MCF 10A (cell line): ENCODE measurements at regions of chr18 and their contacts with region 1.

Region 1: DNA sequence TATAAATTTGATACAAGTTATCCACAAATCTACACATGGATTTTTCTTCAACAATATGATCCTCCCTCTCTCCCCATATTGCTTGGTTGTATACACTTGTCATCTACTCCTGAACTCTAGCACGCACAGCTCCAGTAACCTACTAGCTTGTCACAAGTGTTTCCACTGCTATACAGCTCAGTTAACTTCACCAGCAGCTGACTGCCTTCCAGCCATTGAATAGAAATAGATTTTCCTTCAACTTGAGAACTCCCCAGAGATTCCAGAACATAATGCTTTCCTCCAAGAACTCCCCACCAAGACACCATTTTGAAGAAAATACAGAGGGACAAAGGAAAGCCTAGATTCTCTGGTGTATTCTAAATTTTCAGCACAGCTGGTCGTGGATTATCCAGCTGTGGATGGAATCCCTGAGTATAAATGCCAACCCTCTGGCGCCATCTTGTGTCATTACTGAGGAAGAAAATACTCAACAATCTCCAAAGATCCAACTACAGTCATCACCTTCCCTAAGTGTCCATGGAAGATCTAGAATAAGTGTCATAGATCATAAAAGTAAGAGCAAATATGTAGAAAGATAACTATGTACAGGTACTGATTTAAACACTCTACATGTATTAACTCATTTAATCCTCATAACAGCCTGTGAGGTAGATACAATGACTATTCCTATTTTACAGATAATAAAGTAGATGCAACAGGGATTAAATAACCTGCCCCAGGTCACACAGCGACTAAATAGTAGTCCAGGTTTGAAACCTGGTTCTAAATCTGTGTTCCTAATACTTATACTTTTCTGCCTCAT is 156.7 kb downstream of the ARHGAP28 start:
- DNase-seq: peak; percentile 69
- H3K4me3 Mint-ChIP-seq: no peak overlapping the region
- H3K27ac Mint-ChIP-seq: no peak overlapping the region
- H3K4me1 Mint-ChIP-seq: peaks cover 6% of the 10 kb centered on the region
- H3K27me3 Mint-ChIP-seq: no peaks in the 10 kb centered on the region
- CTCF ChIP-seq: peak; percentile 81

Region 2: DNA sequence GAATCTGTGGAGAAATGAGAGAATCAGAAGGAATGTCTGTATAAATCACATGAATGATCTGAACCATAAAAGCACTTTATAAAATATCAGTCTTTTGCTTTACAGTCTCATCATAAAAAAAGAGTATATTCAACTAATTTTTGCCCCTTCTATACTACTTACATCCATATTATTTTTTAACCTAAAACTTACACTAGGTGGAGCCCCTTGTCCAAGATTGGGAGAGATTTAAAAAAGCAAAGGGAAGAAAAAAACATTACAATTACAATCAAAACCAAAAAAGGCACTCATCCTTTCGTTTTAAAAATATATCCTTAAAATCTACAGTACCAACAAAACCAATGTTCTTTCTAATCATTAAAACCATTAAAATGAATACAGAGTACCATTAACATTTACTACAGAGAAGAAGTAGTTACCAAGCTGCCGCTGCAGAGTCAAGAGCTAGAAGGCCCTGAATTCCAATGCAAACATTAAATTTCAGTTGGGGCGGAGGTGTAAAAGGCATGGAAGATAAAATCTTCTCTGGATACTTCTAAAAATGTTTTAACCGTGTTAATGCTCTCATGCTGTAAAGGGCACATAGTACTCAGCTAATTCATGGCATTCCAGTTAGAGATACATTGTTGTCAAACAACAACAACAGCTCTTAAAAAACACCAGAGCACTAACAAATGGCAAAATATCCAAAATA is 1285.7 kb before region 1 on chr18:
- CTCF ChIA-PET with region 1: interaction called, 4 read pairs
- POLR2A ChIA-PET with region 1: no interaction called
- intact Hi-C with region 1: loop called (anchors 10 kb)
- DNase-seq: peak; percentile 14
- H3K4me3 Mint-ChIP-seq: no peak overlapping the region
- H3K27ac Mint-ChIP-seq: no peak overlapping the region
- H3K4me1 Mint-ChIP-seq: peaks cover 1% of the 10 kb centered on the region
- H3K27me3 Mint-ChIP-seq: peaks cover 36% of the 10 kb centered on the region
- CTCF ChIP-seq: peak; percentile 23

Region 3: GRCh38 chr18:5879479-5879882 is 1006.7 kb before region 1 on chr18:
- CTCF ChIA-PET with region 1: interaction called, 32 read pairs
- POLR2A ChIA-PET with region 1: interaction called, 3 read pairs
- intact Hi-C with region 1: loop called (anchors 1 kb)
- DNase-seq: peak; percentile 0
- H3K4me3 Mint-ChIP-seq: no peak overlapping the region
- H3K27ac Mint-ChIP-seq: no peak overlapping the region
- H3K4me1 Mint-ChIP-seq: no peaks in the 10 kb centered on the region
- H3K27me3 Mint-ChIP-seq: peaks cover 46% of the 10 kb centered on the region
- CTCF ChIP-seq: peak; percentile 74

Region 4: GRCh38 chr18:6495536-6495935 is 390.7 kb before region 1 on chr18:
- CTCF ChIA-PET with region 1: no interaction called
- POLR2A ChIA-PET with region 1: no interaction called
- intact Hi-C with region 1: no loop called
- DNase-seq: no peak
- H3K4me3 Mint-ChIP-seq: no peak overlapping the region
- H3K27ac Mint-ChIP-seq: no peak overlapping the region
- H3K4me1 Mint-ChIP-seq: no peaks in the 10 kb centered on the region
- H3K27me3 Mint-ChIP-seq: peaks cover 1% of the 10 kb centered on the region
- CTCF ChIP-seq: no peak

Region 5: GRCh38 chr18:6543330-6543908 is 342.8 kb before region 1 on chr18:
- CTCF ChIA-PET with region 1: interaction called, 78 read pairs
- POLR2A ChIA-PET with region 1: no interaction called
- intact Hi-C with region 1: loop called (anchors 1 kb)
- DNase-seq: peak; percentile 12
- H3K4me3 Mint-ChIP-seq: no peak overlapping the region
- H3K27ac Mint-ChIP-seq: no peak overlapping the region
- H3K4me1 Mint-ChIP-seq: peaks cover 27% of the 10 kb centered on the region
- H3K27me3 Mint-ChIP-seq: no peaks in the 10 kb centered on the region
- CTCF ChIP-seq: peak; percentile 21

Region 6: GRCh38 chr18:6874316-6874715 is 11.9 kb before region 1 on chr18:
- CTCF ChIA-PET with region 1: interaction called, 11 read pairs
- POLR2A ChIA-PET with region 1: no interaction called
- intact Hi-C with region 1: no loop called
- DNase-seq: no peak
- H3K4me3 Mint-ChIP-seq: no peak overlapping the region
- H3K27ac Mint-ChIP-seq: no peak overlapping the region
- H3K4me1 Mint-ChIP-seq: peaks cover 5% of the 10 kb centered on the region
- H3K27me3 Mint-ChIP-seq: no peaks in the 10 kb centered on the region
- CTCF ChIP-seq: peak; percentile 43

Region 7: GRCh38 chr18:7233134-7233810 is 347.1 kb after region 1 on chr18:
- CTCF ChIA-PET with region 1: no interaction called
- POLR2A ChIA-PET with region 1: no interaction called
- intact Hi-C with region 1: no loop called
- DNase-seq: no peak
- H3K4me3 Mint-ChIP-seq: no peak overlapping the region
- H3K27ac Mint-ChIP-seq: no peak overlapping the region
- H3K4me1 Mint-ChIP-seq: no peaks in the 10 kb centered on the region
- H3K27me3 Mint-ChIP-seq: peaks cover 57% of the 10 kb centered on the region
- CTCF ChIP-seq: no peak